ENCODE measurements at regions of chr7 and their contacts with region 1.

Region 1: DNA sequence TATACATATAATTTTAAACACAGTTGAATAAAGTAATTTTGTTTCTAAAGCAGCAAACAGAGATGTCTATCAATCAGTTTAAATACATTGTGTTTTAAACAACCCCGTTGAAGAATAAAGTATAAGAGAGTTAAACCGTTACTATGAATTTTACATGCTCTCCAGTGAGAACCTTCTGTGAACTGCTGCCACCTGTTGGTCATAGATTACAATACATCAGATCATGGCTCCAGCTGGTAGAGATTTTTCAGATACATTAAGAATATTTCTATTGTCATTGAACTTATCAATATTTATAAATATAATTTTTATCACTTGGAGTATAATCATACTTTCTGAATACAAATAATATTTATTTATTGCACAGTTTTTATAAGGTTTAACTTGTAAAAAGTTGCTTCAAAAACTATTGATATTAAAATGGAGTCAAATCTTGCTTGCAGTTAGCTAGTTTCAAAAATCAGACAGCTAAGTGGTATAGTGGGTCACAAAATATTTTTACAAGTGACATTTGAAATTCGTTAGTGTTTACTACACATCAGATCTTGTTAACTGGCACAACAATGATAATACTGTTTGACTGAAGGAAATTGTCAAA is 561.2 kb upstream of the PHF14 start:
- DNase-seq: no peak
- ATAC-seq: peak in 1 of 2 donors; percentile 61

Region 2: GRCh38 chr7:8418629-8419245 is 1993.8 kb before region 1 on chr7:
- intact Hi-C with region 1: loop called in 1 of 2 experiments (anchors 10 kb)
- DNase-seq: peak; percentile 34
- ATAC-seq: peak in 1 of 2 donors; percentile 51

Region 3: DNA sequence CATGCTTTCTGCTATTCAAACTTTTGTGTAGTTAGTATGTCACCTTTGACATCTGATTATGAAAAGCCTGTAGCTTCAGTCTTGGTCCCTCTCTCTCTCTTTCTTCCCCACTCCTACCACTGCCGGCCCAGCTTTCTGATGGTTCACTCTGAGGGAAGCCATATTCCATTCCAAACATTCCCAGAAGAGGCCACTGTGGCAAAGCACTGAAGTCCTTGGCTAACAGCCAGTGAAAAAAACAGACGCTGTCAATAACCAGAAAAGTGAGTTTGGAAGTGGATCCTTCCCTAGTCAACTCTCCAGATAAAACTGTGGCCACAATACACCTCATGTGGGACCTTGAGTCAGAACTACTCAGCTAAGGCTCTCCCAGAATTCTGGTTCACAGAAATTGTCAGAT is 389.6 kb before region 1 on chr7:
- intact Hi-C with region 1: loop called (anchors 5 to 10 kb)
- DNase-seq: peak; percentile 21
- ATAC-seq: no peak

Region 4: DNA sequence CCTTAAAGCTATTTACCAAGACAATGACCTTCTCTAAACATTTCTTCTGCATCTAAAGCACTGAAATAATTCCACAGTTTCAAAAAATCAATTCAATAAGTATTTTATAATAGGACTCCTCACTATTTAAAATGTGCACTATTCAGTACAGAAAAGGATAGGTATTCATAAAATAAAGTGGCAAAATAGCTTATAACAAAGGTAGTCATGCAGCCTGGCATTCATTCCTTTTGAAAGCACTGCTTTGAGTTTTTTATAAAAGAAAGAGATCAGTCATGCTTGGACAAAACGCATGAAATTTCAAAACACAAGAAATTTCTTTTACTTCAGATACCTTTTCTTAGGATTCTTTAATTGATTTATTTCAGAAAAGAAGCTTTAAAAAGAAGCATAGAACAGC is 128.5 kb before region 1 on chr7:
- intact Hi-C with region 1: no loop called
- DNase-seq: no peak
- ATAC-seq: no peak

Region 5: DNA sequence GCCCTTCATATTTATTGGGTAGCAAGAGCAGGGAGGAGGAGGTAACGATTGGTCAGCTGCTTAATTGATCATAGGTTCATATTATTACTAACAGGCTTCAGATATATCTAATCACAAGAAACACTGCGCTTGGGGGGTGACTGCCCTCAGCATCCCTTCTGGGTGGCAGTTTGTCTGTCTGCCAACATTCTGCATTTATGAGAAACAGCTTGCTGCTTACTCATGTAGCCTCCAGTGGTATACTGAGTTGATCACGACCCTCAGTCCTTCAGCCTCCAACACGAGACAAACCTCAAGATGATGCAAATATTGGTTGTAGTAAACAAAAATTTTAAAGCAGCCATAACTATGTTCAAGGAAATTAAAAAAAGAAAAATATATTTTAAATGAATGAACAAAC is 96.6 kb before region 1 on chr7:
- intact Hi-C with region 1: no loop called
- DNase-seq: no peak
- ATAC-seq: no peak

Region 6: DNA sequence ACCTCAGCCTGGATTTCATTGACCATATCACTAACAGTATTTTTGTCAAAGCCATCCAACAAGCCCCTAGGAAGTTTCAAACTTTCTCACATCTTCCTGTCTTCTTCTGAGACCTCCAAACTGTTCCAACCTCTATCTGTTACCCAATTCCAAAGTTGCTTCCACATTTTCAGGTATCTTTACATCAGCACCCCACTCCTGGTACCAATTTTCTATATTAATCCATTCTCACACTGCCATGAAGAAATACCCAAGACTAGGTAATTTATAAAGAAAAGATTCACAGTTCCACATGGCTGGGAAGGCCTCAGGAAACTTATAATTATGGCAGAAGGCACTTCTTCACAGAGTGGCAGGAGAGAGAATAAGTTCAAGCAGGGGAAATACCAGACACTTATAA is 10.7 kb before region 1 on chr7:
- intact Hi-C with region 1: no loop called
- DNase-seq: no peak
- ATAC-seq: no peak